Activated T-helper 2 cell treated with anti-CD3 and anti-CD28 coated beads, Interferon-gamma antibody, Interleukin-2, Interleukin-4, amounts not matched to agents 10 μg/mL and 5 μg/mL and 100 μg/mL, durations not matched to agents 14 hours and 24 hours and 36 hours (primary cell): ENCODE measurements at regions of chr16 and their contacts with region 1.

Region 1: GRCh38 chr16:57689762-57690558 is 4.6 kb upstream of the DRC7 start:
- DNase-seq: peak; percentile 37
- H3K4me3 Mint-ChIP-seq: no peak overlapping the region
- H3K27ac Mint-ChIP-seq: no peak overlapping the region
- H3K4me1 Mint-ChIP-seq: peaks cover 21% of the 10 kb centered on the region
- H3K27me3 Mint-ChIP-seq: peaks cover 8% of the 10 kb centered on the region

Region 2: GRCh38 chr16:57667526-57668258 is 22.3 kb before region 1 on chr16:
- intact Hi-C with region 1: no loop called
- DNase-seq: no peak
- H3K4me3 Mint-ChIP-seq: no peak overlapping the region
- H3K27ac Mint-ChIP-seq: no peak overlapping the region
- H3K4me1 Mint-ChIP-seq: no peaks in the 10 kb centered on the region
- H3K27me3 Mint-ChIP-seq: peaks cover 8% of the 10 kb centered on the region

Region 3: GRCh38 chr16:57720142-57720575 is 30.2 kb after region 1 on chr16:
- intact Hi-C with region 1: loop called (anchors 5 kb)
- DNase-seq: peak; percentile 33
- H3K4me3 Mint-ChIP-seq: no peak overlapping the region
- H3K27ac Mint-ChIP-seq: no peak overlapping the region
- H3K4me1 Mint-ChIP-seq: no peaks in the 10 kb centered on the region
- H3K27me3 Mint-ChIP-seq: peaks cover 2% of the 10 kb centered on the region